Stomach (tissue), 19 donors: ENCODE measurements at regions of chr10 and their contacts with region 1.

Region 1: GRCh38 chr10:3248888-3249758 is 76.5 kb upstream of the PITRM1 start:
- DNase-seq: peak in 1 of 2 donors; percentile 73
- H3K4me3 ChIP-seq: no peak overlapping the region
- H3K27ac ChIP-seq: peak overlapping the region in 4 of 5 donors; percentile 60 to 72 (median 68)
- H3K4me1 ChIP-seq: peaks cover 0 to 13% (median 3%) of the 10 kb centered on the region in 4 donors
- H3K27me3 ChIP-seq: no peaks in the 10 kb centered on the region
- CTCF ChIP-seq: no peak
- EP300 ChIP-seq: no peak
- POLR2A ChIP-seq: no peak

Region 2: DNA sequence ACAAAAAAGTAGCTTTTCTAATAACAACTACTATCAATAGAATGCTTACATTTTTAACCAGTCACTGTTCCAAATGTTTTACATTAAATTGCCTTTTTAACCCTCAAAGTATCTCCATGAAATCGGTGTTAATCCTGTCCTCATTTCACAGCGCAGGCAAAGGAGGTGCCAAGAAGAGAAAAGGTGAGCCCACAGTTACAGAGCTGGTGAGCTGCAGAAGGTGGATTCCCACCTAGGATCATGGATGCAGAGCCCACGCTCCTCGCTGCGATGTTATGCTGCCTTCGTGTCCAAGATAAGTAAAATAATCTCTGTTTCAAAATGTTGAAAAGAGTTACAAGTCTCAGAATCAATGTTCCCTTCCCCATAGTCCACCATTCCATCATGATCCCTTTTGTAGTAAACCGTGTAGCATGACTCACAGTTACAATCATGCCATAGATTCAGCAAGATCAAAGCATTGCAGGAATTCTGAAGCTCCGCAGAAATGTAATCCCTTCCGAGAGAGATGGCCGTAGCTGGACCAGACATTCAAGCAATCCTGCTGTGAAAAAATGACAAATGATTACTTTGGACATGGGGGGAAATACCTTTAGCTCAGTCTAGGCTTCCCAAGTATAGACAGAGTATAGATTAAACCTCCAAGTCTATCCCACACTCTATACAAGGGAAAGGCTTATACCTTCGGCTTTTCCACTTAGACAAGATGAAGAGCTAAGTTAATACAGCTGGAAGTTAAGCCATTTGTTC is 1182.2 kb after region 1 on chr10:
- intact Hi-C with region 1: no loop called
- DNase-seq: no peak
- H3K4me3 ChIP-seq: no peak overlapping the region
- H3K27ac ChIP-seq: no peak overlapping the region
- H3K4me1 ChIP-seq: no peaks in the 10 kb centered on the region
- H3K27me3 ChIP-seq: no peaks in the 10 kb centered on the region
- CTCF ChIP-seq: no peak
- EP300 ChIP-seq: no peak
- POLR2A ChIP-seq: no peak

Region 3: DNA sequence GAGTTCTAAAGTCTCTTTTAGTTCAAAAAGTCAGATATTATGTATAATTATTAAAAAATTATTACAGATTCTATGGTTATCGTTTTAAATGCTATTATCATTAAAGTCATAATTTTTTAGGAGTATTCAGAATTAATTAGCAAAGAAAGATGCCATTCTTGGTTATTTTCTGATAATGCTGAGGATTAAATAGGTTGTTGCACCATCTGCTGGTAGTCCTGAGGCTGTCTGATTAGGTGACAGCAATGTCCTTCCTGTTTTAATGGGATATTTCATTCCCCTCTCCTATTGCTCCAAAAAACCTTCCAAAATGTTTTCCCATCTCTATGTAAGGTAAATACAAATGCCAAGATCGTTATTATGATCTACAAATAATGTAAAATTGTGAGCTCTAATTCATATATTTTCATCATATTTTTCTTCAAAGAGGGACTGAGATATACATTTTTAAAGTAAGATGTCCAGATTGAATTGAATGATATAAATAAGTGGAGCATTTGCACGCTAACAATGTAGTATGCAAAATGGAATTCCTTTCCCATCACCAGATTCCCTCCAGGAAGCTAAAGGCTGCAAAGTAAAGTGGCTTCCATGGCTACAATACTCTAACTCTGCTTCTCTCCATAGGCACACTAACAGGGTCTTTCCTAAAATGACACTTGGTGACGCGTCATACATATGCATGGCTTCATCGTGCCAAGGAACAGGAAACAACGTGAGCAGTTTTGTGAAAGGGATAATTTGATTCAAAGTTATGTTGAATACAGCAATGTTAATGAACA is 1518.1 kb after region 1 on chr10:
- intact Hi-C with region 1: loop called (anchors 10 kb)
- DNase-seq: peak in 1 of 2 donors; percentile 74
- H3K4me3 ChIP-seq: no peak overlapping the region
- H3K27ac ChIP-seq: no peak overlapping the region
- H3K4me1 ChIP-seq: peaks cover 0 to 20% (median 0%) of the 10 kb centered on the region in 4 donors
- H3K27me3 ChIP-seq: no peaks in the 10 kb centered on the region
- CTCF ChIP-seq: peak in 5 of 7 experiments; percentile 33 to 68 (median 57)
- EP300 ChIP-seq: no peak
- POLR2A ChIP-seq: no peak